Activated B cell treated with CpG ODN at 0.5 μM for 24 hours (primary cell): ENCODE measurements at regions of chr11 and their contacts with region 1.

Region 1: DNA sequence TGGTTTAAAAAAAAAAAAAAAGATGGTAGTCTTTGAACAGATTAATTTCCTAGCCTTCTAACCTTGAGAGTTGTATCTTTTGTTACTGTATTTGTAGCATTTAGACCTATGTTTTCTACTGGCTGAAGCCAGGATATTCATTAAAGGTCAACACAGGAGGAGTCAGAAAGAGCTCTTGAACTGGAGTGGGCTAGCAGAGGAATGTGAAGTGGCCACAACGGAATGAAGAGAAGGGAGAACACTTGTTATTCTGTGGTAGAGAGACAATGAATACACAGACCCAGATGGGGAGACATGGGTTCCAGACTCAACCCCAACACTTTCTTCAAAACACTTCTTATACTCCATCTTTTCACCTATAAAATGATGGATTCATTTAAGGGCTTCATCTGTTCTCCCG is 88.1 kb downstream of the RELT start:
- DNase-seq: no peak
- ATAC-seq: no peak
- H3K4me3 Mint-ChIP-seq: no peak overlapping the region
- H3K27ac Mint-ChIP-seq: no peak overlapping the region
- H3K4me1 Mint-ChIP-seq: peaks cover 17% of the 10 kb centered on the region
- H3K27me3 Mint-ChIP-seq: no peaks in the 10 kb centered on the region
- CTCF ChIP-seq: no peak

Region 2: DNA sequence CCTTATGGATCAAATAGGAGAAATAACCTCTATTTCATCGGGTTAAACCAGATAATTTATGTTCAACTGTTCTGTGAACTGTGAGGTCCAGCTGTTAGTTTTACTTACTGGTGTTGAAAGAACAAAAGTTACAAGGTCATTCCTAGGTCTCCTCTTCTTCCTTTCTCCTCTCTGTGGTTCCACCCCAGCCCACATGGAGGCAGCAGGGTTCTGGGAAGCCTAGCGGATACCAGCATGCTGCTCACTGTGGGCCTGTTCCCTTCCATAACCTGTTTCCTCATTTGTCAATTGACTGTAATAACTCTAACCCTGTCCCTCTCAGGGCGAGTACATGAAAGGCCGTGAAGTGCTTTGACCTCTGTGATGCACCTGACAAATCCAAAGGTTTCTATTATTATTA is 60.3 kb before region 1 on chr11:
- CTCF ChIA-PET with region 1: no interaction called
- POLR2A ChIA-PET with region 1: no interaction called
- intact Hi-C with region 1: no loop called
- DNase-seq: no peak
- ATAC-seq: no peak
- H3K4me3 Mint-ChIP-seq: no peak overlapping the region
- H3K27ac Mint-ChIP-seq: no peak overlapping the region
- H3K4me1 Mint-ChIP-seq: peaks cover 4% of the 10 kb centered on the region
- H3K27me3 Mint-ChIP-seq: no peaks in the 10 kb centered on the region
- CTCF ChIP-seq: no peak

Region 3: GRCh38 chr11:73519266-73519665 is 54.9 kb after region 1 on chr11:
- CTCF ChIA-PET with region 1: no interaction called
- POLR2A ChIA-PET with region 1: interaction called, 10 read pairs
- intact Hi-C with region 1: no loop called
- DNase-seq: no peak
- ATAC-seq: no peak
- H3K4me3 Mint-ChIP-seq: no peak overlapping the region
- H3K27ac Mint-ChIP-seq: no peak overlapping the region
- H3K4me1 Mint-ChIP-seq: peaks cover 16% of the 10 kb centered on the region
- H3K27me3 Mint-ChIP-seq: no peaks in the 10 kb centered on the region
- CTCF ChIP-seq: no peak